Caco-2 (cell line): ENCODE measurements at regions of chr18 and their contacts with region 1.

Region 1: GRCh38 chr18:36095936-36096519 is 28.7 kb upstream of the RPRD1A start:
- DNase-seq: peak in 1 of 2 experiments; percentile 4
- H3K4me3 ChIP-seq: no peak overlapping the region
- H3K4me3 Mint-ChIP-seq: no peak overlapping the region
- H3K27ac Mint-ChIP-seq: no peak overlapping the region
- H3K4me1 ChIP-seq: no peaks in the 10 kb centered on the region
- H3K4me1 Mint-ChIP-seq: no peaks in the 10 kb centered on the region
- H3K27me3 ChIP-seq: no peaks in the 10 kb centered on the region
- H3K27me3 Mint-ChIP-seq: peaks cover 10% of the 10 kb centered on the region
- CTCF ChIP-seq: peak in 1 of 2 experiments; percentile 24

Region 2: GRCh38 chr18:36015629-36016028 is 80.4 kb before region 1 on chr18:
- CTCF ChIA-PET with region 1: no interaction called
- POLR2A ChIA-PET with region 1: no interaction called
- intact Hi-C with region 1: loop called (anchors 5 kb)
- DNase-seq: no peak
- H3K4me3 ChIP-seq: no peak overlapping the region
- H3K4me3 Mint-ChIP-seq: no peak overlapping the region
- H3K27ac Mint-ChIP-seq: no peak overlapping the region
- H3K4me1 ChIP-seq: no peaks in the 10 kb centered on the region
- H3K4me1 Mint-ChIP-seq: no peaks in the 10 kb centered on the region
- H3K27me3 ChIP-seq: no peaks in the 10 kb centered on the region
- H3K27me3 Mint-ChIP-seq: no peaks in the 10 kb centered on the region
- CTCF ChIP-seq: no peak

Region 3: DNA sequence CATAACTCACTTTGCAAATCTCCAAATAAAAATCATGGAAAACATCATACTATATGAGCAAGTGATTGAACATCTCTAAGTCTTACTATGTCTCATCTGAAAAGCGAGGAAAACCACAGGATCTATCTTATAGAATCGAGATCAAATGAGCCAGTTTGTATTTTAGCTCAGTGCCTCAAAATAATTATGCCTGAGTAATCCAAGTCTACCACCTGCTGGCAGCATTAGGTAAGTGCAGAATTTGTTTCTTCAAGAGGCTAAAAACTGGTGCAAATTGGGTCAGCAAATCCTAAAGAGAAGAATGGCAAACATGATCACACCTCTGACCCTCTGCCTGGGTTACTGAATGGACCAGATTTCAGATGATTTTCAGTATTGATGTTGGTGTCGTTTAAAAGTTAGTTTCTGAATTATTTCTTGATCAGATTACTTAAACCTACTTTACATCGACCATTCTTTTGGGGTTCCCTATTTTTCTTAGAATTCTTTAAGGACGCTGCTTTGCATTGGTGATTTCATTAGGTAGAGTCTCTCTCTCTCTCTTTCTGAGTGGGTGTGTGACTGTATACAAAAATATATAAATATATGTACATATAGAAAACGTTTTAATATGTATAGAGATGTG is 188.8 kb after region 1 on chr18:
- CTCF ChIA-PET with region 1: interaction called, 11 read pairs
- POLR2A ChIA-PET with region 1: no interaction called
- intact Hi-C with region 1: loop called (anchors 1 kb)
- DNase-seq: peak in 1 of 2 experiments; percentile 24
- H3K4me3 ChIP-seq: no peak overlapping the region
- H3K4me3 Mint-ChIP-seq: no peak overlapping the region
- H3K27ac Mint-ChIP-seq: no peak overlapping the region
- H3K4me1 ChIP-seq: no peaks in the 10 kb centered on the region
- H3K4me1 Mint-ChIP-seq: no peaks in the 10 kb centered on the region
- H3K27me3 ChIP-seq: no peaks in the 10 kb centered on the region
- H3K27me3 Mint-ChIP-seq: peaks cover 2% of the 10 kb centered on the region
- CTCF ChIP-seq: peak; percentile 45 to 57

Region 4: DNA sequence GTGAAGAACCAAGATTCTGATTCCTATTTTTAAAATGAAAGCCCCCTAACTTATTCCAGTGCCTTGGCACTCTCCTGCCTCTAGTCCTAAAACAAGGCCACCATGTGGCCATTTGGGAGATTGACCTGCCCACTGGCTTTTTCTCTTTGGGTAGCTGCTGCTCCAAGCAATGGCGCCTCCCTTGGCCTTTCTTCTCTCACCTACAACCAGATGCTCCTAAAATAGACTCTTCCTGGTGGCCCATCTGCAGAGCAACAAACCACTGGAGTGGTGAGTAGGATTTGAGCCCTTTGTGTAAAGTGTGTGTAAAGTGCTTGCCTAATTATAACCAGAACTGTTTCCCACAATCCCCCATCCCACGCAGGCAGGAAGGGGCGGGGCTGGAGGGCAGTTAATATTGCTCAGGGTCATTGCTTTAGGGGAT is 315.7 kb after region 1 on chr18:
- CTCF ChIA-PET with region 1: no interaction called
- POLR2A ChIA-PET with region 1: no interaction called
- intact Hi-C with region 1: loop called (anchors 5 kb)
- DNase-seq: peak in 1 of 2 experiments; percentile 12
- H3K4me3 ChIP-seq: no peak overlapping the region
- H3K4me3 Mint-ChIP-seq: no peak overlapping the region
- H3K27ac Mint-ChIP-seq: no peak overlapping the region
- H3K4me1 ChIP-seq: no peaks in the 10 kb centered on the region
- H3K4me1 Mint-ChIP-seq: no peaks in the 10 kb centered on the region
- H3K27me3 ChIP-seq: no peaks in the 10 kb centered on the region
- H3K27me3 Mint-ChIP-seq: peaks cover 2% of the 10 kb centered on the region
- CTCF ChIP-seq: no peak

Region 5: DNA sequence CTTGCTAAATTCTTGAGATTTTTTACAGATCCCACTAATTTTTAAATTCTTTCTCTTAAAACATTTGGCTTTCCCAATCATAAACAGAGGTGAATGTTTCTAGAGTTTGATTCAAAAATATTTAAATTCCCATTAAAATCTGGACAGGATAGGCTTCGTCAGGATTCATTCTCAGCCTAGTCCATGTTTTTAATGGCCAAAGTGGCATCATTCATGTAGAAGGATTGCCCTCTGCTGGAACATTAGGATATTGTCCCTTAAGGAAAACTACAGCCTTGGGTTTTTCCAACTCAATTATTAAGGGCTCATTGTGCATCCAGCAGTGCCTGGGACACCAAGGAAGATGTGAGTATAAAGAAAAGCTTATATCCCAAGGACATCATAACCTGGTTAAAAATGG is 661.1 kb after region 1 on chr18:
- CTCF ChIA-PET with region 1: no interaction called
- POLR2A ChIA-PET with region 1: no interaction called
- intact Hi-C with region 1: loop called (anchors 2 kb)
- DNase-seq: peak in 1 of 2 experiments; percentile 13
- H3K4me3 ChIP-seq: no peak overlapping the region
- H3K4me3 Mint-ChIP-seq: no peak overlapping the region
- H3K27ac Mint-ChIP-seq: no peak overlapping the region
- H3K4me1 ChIP-seq: no peaks in the 10 kb centered on the region
- H3K4me1 Mint-ChIP-seq: no peaks in the 10 kb centered on the region
- H3K27me3 ChIP-seq: no peaks in the 10 kb centered on the region
- H3K27me3 Mint-ChIP-seq: no peaks in the 10 kb centered on the region
- CTCF ChIP-seq: peak; percentile 14 to 31